ENCODE measurements at regions of chr19 and their contacts with region 1.

Region 1: DNA sequence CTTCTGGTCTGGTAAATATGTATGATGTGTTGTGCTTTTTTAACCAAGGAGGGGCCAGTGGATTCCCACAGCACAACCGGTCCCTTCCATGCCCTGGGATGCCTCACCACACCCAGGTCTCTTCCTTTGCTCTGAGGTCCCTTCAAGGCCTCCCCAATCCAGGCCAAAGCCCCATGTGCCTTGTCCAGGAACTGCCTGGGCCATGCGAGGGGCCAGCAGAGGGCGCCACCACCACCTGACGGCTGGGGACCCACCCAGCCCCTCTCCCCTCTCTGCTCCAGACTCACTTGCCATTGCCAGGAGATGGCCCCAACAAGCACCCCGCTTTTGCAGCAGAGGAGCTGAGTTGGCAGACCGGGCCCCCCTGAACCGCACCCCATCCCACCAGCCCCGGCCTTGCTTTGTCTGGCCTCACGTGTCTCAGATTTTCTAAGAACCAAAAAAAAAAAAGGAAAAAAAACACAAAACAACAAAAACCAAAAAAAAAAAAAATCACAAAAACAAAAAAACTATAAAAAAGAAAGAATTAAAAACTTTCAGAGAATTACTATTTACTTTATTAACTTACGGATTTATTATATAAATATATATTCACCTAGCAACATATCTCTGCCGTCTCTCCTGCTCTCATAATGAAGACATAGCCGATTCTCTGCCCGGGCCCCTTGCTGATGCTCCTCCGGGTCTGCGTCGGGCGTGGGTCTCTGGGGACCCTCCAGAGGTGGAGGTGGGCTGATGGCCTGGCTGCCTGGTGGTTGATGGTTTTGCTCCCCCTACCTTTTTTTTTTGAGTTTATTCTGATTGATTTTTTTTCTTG is 14.4 kb downstream of the CAPN12 start:
- DNase-seq: peak; percentile 92
- ATAC-seq: peak; percentile 82
- H3K4me3 Mint-ChIP-seq: no peak overlapping the region
- H3K27ac Mint-ChIP-seq: peak overlapping the region; percentile 60
- H3K4me1 Mint-ChIP-seq: peaks cover 18% of the 10 kb centered on the region
- H3K27me3 Mint-ChIP-seq: no peaks in the 10 kb centered on the region

Region 2: DNA sequence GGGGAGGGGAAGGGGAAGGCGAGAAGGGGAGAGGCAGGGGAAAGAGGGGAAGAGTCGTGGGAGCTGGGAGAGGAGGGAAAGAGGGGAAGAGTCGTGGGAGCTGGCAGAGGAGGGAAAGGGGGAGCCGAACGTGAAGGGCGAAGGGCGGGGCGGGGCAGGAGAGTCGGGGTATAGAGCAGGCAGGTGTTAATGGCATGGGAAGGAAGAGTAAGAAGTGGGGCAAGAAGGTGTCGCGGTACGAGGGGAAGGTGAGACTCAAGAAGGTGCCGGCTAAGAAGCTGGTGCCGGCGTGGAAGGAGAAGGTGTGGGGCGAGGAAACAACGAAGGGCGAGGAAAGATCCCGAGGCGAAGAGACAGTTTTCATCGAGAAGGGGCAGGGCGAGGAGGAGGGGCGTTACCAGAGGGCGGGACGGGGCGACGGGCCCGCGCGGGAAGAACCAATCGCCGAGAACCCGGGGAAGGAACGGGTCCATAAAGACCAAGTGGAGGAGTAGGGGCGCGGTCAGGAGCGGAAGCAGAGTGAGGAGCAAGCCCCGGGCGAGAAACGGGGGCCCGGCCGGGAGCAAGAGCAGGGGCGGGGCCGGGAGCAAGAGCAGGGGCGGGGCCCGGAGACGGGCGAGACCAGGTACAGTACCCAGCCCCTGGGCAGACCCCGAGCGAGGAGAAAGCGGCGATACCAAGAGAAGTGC is 393.8 kb before region 1 on chr19:
- CTCF ChIA-PET with region 1: no interaction called
- POLR2A ChIA-PET with region 1: no interaction called
- intact Hi-C with region 1: no loop called
- DNase-seq: peak; percentile 98
- ATAC-seq: peak; percentile 75
- H3K4me3 Mint-ChIP-seq: peak overlapping the region; percentile 82
- H3K27ac Mint-ChIP-seq: peak overlapping the region; percentile 98
- H3K4me1 Mint-ChIP-seq: peaks cover 12% of the 10 kb centered on the region
- H3K27me3 Mint-ChIP-seq: no peaks in the 10 kb centered on the region

Region 3: GRCh38 chr19:38838573-38839269 is 108.9 kb after region 1 on chr19:
- CTCF ChIA-PET with region 1: interaction called, 5 read pairs
- POLR2A ChIA-PET with region 1: interaction called, 6 read pairs
- intact Hi-C with region 1: loop called (anchors 1 to 5 kb)
- DNase-seq: peak; percentile 89
- ATAC-seq: peak; percentile 83
- H3K4me3 Mint-ChIP-seq: peak overlapping the region; percentile 9
- H3K27ac Mint-ChIP-seq: peak overlapping the region; percentile 86
- H3K4me1 Mint-ChIP-seq: peaks cover 58% of the 10 kb centered on the region
- H3K27me3 Mint-ChIP-seq: no peaks in the 10 kb centered on the region

Region 4: DNA sequence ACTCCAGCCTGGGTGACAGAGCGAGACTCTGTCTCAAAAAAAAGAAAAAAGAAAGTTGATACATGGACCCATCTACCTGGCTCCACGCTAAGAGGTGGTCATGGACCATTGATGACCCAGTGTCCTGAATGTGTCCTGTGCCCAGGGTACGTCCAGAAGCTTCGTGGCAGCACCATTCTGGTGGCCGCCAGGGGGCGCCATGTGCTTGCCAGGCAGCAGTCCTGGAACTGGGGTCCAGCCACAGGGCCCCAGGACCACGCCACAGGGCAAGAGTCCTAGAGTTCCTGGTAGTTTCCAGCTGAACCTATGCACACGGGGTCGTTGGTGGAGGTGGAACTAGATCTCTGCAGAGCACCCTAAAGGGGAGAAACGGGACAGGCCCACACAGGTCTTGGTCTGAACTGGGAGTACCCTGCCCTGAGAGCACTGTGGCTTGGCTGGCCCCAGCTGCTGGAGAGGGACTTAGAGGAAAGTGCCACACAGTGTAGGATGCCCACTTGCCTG is 322.4 kb after region 1 on chr19:
- CTCF ChIA-PET with region 1: no interaction called
- POLR2A ChIA-PET with region 1: no interaction called
- intact Hi-C with region 1: no loop called
- DNase-seq: peak; percentile 83
- ATAC-seq: peak; percentile 78
- H3K4me3 Mint-ChIP-seq: no peak overlapping the region
- H3K27ac Mint-ChIP-seq: no peak overlapping the region
- H3K4me1 Mint-ChIP-seq: no peaks in the 10 kb centered on the region
- H3K27me3 Mint-ChIP-seq: no peaks in the 10 kb centered on the region